ENCODE measurements at regions of chr1 and their contacts with region 1.

Region 1: GRCh38 chr1:153526132-153526543 is 9.7 kb downstream of the S100A6 start:
- DNase-seq: no peak
- H3K4me3 ChIP-seq: no peak overlapping the region
- H3K27ac ChIP-seq: no peak overlapping the region
- H3K4me1 ChIP-seq: peaks cover 8% of the 10 kb centered on the region
- H3K27me3 ChIP-seq: no peaks in the 10 kb centered on the region
- CTCF ChIP-seq: no peak

Region 2: GRCh38 chr1:153415850-153416570 is 110.1 kb before region 1 on chr1 and contains the start of gene S100A7A:
- CTCF ChIA-PET with region 1: no interaction called
- POLR2A ChIA-PET with region 1: no interaction called
- intact Hi-C with region 1: no loop called
- DNase-seq: no peak
- H3K4me3 ChIP-seq: no peak within 1 kb of the TSS
- H3K27ac ChIP-seq: no peak within 1 kb of the TSS
- H3K4me1 ChIP-seq: no peaks in the 10 kb centered on the region
- H3K27me3 ChIP-seq: peaks cover 35% of the 10 kb centered on the region
- CTCF ChIP-seq: no peak
- total RNA-seq, gene S100A7A: not detected in 2 replicates

Region 3: GRCh38 chr1:153545067-153546055 is 19.2 kb after region 1 on chr1 and contains the start of gene S100A4:
- CTCF ChIA-PET with region 1: no interaction called
- POLR2A ChIA-PET with region 1: no interaction called
- intact Hi-C with region 1: no loop called
- DNase-seq: peak; percentile 91 to 98
- H3K4me3 ChIP-seq: peak within 1 kb of the TSS; percentile 61
- H3K27ac ChIP-seq: peak within 1 kb of the TSS; percentile 67
- H3K4me1 ChIP-seq: peaks cover 91% of the 10 kb centered on the region
- H3K27me3 ChIP-seq: no peaks in the 10 kb centered on the region
- CTCF ChIP-seq: no peak
- total RNA-seq, gene S100A4: 303 and 346 TPM in 2 replicates

Region 4: GRCh38 chr1:153742411-153743142 is 216.4 kb after region 1 on chr1:
- CTCF ChIA-PET with region 1: no interaction called
- POLR2A ChIA-PET with region 1: interaction called, 18 read pairs
- intact Hi-C with region 1: no loop called
- DNase-seq: no peak
- H3K4me3 ChIP-seq: no peak overlapping the region
- H3K27ac ChIP-seq: no peak overlapping the region
- H3K4me1 ChIP-seq: no peaks in the 10 kb centered on the region
- H3K27me3 ChIP-seq: no peaks in the 10 kb centered on the region
- CTCF ChIP-seq: no peak

Measured in PC-9 (cell line).